Endothelial cell of umbilical vein (primary cell): ENCODE measurements at regions of chr2 and their contacts with region 1.

Region 1: DNA sequence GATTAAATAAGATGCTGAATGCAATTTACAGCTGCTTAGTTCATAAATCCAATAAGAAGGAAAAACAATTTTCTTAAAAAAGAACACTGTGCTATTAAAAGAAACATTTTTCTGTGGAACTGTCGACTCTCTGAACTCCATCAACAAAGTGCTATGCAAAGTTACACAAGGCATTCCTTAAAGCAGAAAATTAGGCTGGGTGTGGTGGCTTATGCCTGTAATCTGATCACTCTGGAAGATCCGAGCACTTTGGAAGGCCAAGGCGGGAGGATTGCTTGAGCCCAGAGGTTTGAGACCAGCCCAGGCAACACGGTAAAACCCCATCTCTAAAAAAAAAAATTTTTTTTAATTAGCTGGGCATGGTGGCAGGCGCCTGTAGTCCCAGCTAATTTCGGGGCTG is 13.0 kb downstream of the MCM6 start:
- DNase-seq: no peak
- H3K4me3 ChIP-seq: no peak overlapping the region
- H3K27ac ChIP-seq: no peak overlapping the region
- H3K4me1 ChIP-seq: no peaks in the 10 kb centered on the region
- H3K27me3 ChIP-seq: no peaks in the 10 kb centered on the region
- CTCF ChIP-seq: no peak
- POLR2A ChIP-seq: no peak

Region 2: GRCh38 chr2:135876066-135876711 is 13.0 kb after region 1 on chr2 and contains the start of gene MCM6:
- CTCF ChIA-PET with region 1: interaction called, 6 read pairs
- POLR2A ChIA-PET with region 1: no interaction called
- dilution Hi-C with region 1: no loop called
- intact Hi-C with region 1: loop called (anchors 2 kb)
- DNase-seq: peak; percentile 99
- H3K4me3 ChIP-seq: peak within 1 kb of the TSS; percentile 75 to 83 (median 76)
- H3K27ac ChIP-seq: peak within 1 kb of the TSS; percentile 58
- H3K4me1 ChIP-seq: peaks cover 5% of the 10 kb centered on the region
- H3K27me3 ChIP-seq: no peaks in the 10 kb centered on the region
- CTCF ChIP-seq: no peak
- POLR2A ChIP-seq: peak; percentile 26
- total RNA-seq, gene MCM6: 48.1 and 52.6 TPM in 2 replicates